OCI-LY7 (cell line): ENCODE measurements at regions of chr16 and their contacts with region 1.

Region 1: GRCh38 chr16:22665048-22665797 is 148.7 kb upstream of the HS3ST2 start:
- DNase-seq: no peak
- H3K4me3 ChIP-seq: no peak overlapping the region
- H3K27ac ChIP-seq: no peak overlapping the region
- H3K4me1 ChIP-seq: peaks cover 10% of the 10 kb centered on the region
- CTCF ChIP-seq: no peak

Region 2: GRCh38 chr16:22232277-22233042 is 432.8 kb before region 1 on chr16:
- CTCF ChIA-PET with region 1: no interaction called
- POLR2A ChIA-PET with region 1: no interaction called
- intact Hi-C with region 1: no loop called
- DNase-seq: no peak
- H3K4me3 ChIP-seq: no peak overlapping the region
- H3K27ac ChIP-seq: no peak overlapping the region
- H3K4me1 ChIP-seq: no peaks in the 10 kb centered on the region
- CTCF ChIP-seq: no peak

Region 3: GRCh38 chr16:22618842-22619241 is 46.4 kb before region 1 on chr16:
- CTCF ChIA-PET with region 1: no interaction called
- POLR2A ChIA-PET with region 1: no interaction called
- intact Hi-C with region 1: loop called (anchors 5 kb)
- DNase-seq: no peak
- H3K4me3 ChIP-seq: no peak overlapping the region
- H3K27ac ChIP-seq: no peak overlapping the region
- H3K4me1 ChIP-seq: no peaks in the 10 kb centered on the region
- CTCF ChIP-seq: no peak